GM13976 (cell line): ENCODE measurements at regions of chr6 and their contacts with region 1.

Region 1: GRCh38 chr6:111030008-111031007 is 48.5 kb downstream of the RPF2 start:
- DNase-seq: no peak
- CTCF ChIP-seq: no peak

Region 2: GRCh38 chr6:110528101-110528929 is 502.0 kb before region 1 on chr6:
- in situ Hi-C with region 1: no loop called
- DNase-seq: peak; percentile 65
- CTCF ChIP-seq: peak; percentile 64

Region 3: DNA sequence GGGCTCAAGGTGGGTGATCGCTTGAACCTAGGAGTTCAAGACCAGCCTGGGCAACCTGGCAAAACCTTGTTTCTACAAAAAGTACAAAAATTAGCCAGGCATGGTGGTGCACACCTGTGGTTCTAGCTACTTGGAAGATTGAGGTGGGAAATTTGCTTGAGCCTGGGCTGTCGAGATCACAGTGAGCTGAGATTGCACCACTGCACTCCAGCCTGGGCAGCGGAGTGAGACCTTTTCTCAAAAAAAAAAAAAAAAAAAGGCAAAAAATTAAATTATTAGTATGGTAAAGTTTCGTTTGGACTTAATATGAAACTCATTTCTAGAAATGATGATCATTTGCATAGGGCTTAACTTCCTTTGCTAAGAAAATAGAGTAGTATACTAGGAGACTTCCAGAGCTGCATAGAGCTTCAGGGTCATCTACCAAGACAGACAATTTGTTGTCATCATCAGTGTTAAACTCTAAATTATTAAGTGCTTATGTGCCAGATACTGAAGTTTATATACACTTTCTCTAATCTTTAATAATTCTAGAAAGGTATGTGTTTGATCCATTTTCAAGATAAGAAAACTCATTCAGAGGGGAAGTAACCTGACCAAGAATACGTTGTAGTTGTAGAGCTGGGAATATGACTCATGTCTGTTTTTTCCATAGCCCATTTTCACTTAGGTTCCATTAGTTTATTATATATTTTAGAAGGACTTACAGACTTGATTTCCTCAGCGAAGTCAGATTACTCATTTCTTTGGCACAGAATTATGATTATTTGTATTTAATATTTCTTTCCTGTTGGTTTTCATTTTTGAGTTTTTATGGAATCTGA is 141.5 kb after region 1 on chr6:
- in situ Hi-C with region 1: no loop called
- DNase-seq: peak; percentile 44
- CTCF ChIP-seq: no peak

Region 4: DNA sequence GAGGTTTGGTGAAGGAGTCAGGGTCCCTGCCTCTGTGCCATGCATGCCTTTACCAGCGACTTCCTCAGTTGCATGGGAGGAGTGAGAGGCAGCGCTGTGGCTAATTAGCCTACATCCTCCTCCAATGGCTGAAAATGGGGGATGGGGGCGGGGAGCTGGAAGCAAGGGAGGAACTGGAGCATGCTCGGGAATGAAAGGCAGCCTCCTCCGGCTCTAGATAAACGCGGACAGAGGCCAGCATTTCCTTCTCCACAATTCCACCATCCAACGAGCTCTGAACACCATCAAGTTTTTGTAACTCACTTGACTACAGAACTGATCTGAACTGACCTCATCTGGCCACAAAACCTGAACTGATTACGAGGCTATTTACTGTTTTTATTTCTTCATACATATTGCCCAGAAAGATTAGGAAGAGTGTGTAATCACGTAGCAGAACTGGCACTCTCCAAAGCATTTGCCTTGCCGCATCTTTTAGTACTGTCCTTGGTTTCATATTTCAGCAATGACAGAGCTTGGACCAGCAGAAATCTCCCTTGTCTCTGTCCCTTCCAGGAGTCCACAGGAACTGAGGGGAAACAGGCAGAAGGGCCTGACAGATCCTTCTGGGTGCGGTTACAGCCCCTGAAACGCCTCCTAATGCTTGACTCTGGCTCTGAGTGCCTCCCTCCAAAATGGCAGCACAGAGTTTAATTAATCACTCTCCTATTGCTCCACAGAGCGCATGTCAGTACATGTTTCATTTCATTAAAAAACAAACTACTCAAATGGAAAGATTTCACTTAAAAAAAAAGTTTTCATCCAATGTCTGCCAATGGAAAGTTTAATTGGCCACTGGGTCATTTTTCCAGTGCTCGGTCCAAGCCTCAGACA is 633.6 kb after region 1 on chr6:
- in situ Hi-C with region 1: no loop called
- DNase-seq: no peak
- CTCF ChIP-seq: no peak

Region 5: GRCh38 chr6:112018619-112019416 is 988.5 kb after region 1 on chr6:
- in situ Hi-C with region 1: loop called (anchors 25 kb)
- DNase-seq: no peak
- CTCF ChIP-seq: no peak